ENCODE measurements at regions of chr17 and their contacts with region 1.

Region 1: GRCh38 chr17:27332485-27333409 is 38.8 kb downstream of the WSB1 start:
- DNase-seq: peak; percentile 99
- ATAC-seq: peak; percentile 97

Region 2: DNA sequence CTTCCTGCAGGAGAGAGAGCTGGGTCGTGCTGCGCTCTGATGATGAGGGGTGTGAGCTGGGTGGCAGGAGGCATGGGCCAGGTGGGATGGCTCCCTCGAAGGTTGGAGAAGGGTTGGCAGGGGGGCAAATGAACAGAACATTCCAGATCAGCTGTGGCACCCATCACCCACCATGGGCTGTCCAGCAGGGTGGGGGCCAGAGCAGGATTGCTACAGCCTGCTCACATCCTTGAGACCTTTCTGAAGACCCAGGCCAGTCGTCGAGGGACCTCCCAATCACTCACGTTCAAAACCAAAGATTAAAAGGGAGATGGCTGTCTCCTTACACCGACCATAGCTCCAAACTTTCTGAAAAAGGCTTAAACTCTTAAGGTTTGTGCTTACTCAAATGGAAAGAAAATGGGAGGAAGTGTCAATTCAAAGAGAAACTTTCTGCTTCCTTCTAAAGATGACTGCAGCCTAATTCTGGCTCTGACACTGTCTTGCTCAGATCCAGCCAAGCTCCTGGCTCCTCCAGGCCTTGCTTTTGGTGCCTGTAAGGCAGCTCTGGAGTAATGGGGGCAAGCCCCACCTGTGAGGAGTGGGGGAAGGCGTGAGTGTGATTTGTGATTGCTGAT is 93.8 kb before region 1 on chr17:
- intact Hi-C with region 1: no loop called
- DNase-seq: no peak
- ATAC-seq: no peak

Region 3: GRCh38 chr17:27293898-27294688 is 38.7 kb before region 1 on chr17 and contains the start of gene WSB1:
- intact Hi-C with region 1: loop called (anchors 2 kb)
- DNase-seq: peak; percentile 97
- ATAC-seq: peak; percentile 97
- total RNA-seq, gene WSB1: 47.1 TPM

Measured in Right ventricle myocardium superior (tissue), 1 donor.